Breast epithelium (tissue), 4 donors: ENCODE measurements at regions of chr5 and their contacts with region 1.

Region 1: DNA sequence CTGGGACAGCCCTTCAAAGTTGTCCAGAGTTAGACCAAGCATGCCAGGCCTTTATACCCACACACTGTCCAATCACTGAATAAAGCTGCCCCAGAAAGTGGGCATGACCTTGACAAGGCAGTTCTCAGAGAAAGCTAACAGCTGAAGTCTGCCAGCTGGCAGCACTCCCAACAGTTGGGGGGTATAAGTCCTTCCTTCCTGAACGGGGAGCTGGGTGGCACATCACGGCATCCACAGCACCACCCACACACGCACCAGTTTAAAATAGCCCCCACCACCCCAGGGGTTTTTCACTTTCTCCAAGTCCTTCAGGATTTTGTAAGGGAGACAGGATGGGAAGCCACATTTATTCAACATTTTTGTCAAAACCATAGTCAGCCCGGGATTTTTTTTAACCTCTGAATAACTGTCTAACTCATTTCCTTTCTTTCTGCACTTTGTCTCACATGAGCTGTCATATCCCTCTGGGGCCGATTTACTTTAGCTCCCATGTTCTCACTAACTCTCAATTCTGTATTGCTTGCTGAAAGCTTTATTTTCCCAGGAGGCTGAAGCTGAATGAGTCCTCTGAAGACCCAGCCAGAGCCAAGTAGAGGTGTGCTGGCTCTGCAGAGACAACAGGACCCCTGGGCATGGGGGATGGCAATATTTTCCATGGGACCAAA is 15.4 kb downstream of the FAM81B start:
- DNase-seq: no peak
- H3K4me3 ChIP-seq: no peak overlapping the region
- H3K27ac ChIP-seq: no peak overlapping the region
- H3K4me1 ChIP-seq: no peaks in the 10 kb centered on the region
- H3K27me3 ChIP-seq: no peaks in the 10 kb centered on the region
- CTCF ChIP-seq: no peak
- POLR2A ChIP-seq: no peak

Region 2: DNA sequence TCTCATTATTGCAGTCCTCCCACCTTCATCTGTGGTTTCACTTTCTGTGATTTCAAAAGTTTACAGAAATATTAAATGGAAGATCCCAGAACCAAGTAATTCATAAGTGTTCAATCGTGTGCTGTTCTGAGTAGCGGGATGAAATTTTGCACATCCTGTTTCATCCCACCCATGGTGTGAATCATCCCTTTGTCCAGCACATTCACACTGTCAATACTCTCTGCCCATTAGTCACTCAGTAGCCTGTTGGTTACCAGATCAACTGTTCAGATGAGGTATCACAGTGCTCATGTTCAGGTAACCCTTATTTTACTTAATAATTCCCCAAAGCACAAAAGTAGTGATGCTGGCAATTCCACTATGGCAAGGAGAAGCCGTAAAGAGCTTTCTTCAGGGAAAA is 11.4 kb after region 1 on chr5:
- intact Hi-C with region 1: loop called (anchors 1 kb)
- DNase-seq: no peak
- H3K4me3 ChIP-seq: no peak overlapping the region
- H3K27ac ChIP-seq: no peak overlapping the region
- H3K4me1 ChIP-seq: no peaks in the 10 kb centered on the region
- H3K27me3 ChIP-seq: no peaks in the 10 kb centered on the region
- CTCF ChIP-seq: no peak
- POLR2A ChIP-seq: no peak

Region 3: DNA sequence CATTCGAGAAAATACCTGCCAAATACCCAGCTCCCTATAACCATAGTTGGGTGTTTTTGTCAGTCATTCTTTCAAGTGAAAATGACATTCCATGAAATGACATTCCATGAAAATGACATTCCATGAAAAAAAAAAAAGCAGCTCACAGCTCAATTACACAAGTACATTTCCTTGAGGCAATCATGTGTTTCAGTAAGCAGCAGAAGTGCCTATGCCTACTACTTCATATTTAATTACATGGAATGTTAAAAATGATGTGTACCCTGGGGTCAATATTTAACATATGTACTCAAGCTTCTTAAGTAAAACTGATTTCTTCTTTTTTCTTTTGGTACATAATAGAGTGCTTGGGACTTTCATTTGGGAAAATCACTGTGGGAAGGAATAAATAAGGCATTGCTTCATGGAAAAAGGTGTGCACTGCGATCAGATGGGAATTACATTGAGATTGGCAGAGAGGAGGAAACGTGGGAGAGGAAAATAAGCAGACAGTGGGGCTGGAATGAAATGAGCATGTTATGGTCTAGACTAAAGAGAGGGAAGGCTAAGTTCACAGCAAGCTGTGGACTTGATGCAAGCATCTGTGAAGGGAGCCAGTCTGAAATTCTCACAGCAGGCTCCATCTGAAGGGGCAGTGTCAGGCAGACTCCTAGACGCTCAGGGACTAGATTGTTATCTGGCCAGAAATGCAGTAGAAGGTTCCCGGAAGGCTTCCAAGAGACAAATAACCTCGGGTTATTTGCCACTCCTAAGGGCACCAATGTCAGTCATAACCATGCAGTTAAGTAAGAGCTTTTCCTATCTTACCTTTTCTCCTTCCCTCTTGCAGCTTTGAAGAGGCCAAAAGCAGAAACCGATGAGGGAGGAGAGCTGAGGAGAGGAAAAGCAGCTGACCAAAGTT is 291.5 kb after region 1 on chr5:
- intact Hi-C with region 1: no loop called
- DNase-seq: no peak
- H3K4me3 ChIP-seq: no peak overlapping the region
- H3K27ac ChIP-seq: no peak overlapping the region
- H3K4me1 ChIP-seq: no peaks in the 10 kb centered on the region
- H3K27me3 ChIP-seq: no peaks in the 10 kb centered on the region
- CTCF ChIP-seq: no peak
- POLR2A ChIP-seq: no peak